Activated CD4-positive, alpha-beta T cell treated with anti-CD3 and anti-CD28 coated beads for 36 hours (primary cell): ENCODE measurements at regions of chr19 and their contacts with region 1.

Region 1: GRCh38 chr19:18000935-18001778 is 6.8 kb upstream of the ARRDC2 start:
- DNase-seq: peak; percentile 95
- ATAC-seq: peak; percentile 84
- H3K4me3 Mint-ChIP-seq: peak overlapping the region; percentile 85
- H3K27ac Mint-ChIP-seq: peak overlapping the region; percentile 95
- H3K4me1 Mint-ChIP-seq: peaks cover 25% of the 10 kb centered on the region
- H3K27me3 Mint-ChIP-seq: no peaks in the 10 kb centered on the region

Region 2: DNA sequence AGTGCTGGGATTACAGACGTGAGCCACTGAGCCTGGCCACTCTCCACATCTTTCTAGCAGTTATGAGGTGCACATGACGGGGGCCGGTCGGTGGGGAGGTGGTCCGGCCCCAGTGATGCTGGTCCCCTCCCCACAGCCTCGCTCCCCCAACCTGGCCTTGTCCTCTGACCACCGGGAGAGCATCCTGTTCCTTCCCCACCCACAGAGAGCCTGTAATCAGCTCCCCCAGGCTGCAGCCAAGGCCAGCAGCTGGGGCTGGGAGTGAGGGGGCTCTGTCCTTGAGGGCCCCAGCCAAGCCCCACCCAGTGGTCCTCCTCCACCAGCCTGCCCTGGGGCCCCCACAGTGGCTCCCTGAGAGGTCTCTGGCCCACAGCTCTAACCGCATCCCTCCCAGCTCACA is 176.8 kb before region 1 on chr19:
- CTCF ChIA-PET with region 1: no interaction called
- POLR2A ChIA-PET with region 1: no interaction called
- intact Hi-C with region 1: no loop called
- DNase-seq: no peak
- ATAC-seq: peak; percentile 12
- H3K4me3 Mint-ChIP-seq: no peak overlapping the region
- H3K27ac Mint-ChIP-seq: no peak overlapping the region
- H3K4me1 Mint-ChIP-seq: no peaks in the 10 kb centered on the region
- H3K27me3 Mint-ChIP-seq: no peaks in the 10 kb centered on the region

Region 3: GRCh38 chr19:17873786-17874757 is 127.1 kb before region 1 on chr19:
- CTCF ChIA-PET with region 1: interaction called, 5 read pairs
- POLR2A ChIA-PET with region 1: no interaction called
- intact Hi-C with region 1: loop called (anchors 1 to 5 kb)
- DNase-seq: peak; percentile 89
- ATAC-seq: peak; percentile 83
- H3K4me3 Mint-ChIP-seq: peak overlapping the region; percentile 78
- H3K27ac Mint-ChIP-seq: peak overlapping the region; percentile 25
- H3K4me1 Mint-ChIP-seq: peaks cover 17% of the 10 kb centered on the region
- H3K27me3 Mint-ChIP-seq: no peaks in the 10 kb centered on the region

Region 4: DNA sequence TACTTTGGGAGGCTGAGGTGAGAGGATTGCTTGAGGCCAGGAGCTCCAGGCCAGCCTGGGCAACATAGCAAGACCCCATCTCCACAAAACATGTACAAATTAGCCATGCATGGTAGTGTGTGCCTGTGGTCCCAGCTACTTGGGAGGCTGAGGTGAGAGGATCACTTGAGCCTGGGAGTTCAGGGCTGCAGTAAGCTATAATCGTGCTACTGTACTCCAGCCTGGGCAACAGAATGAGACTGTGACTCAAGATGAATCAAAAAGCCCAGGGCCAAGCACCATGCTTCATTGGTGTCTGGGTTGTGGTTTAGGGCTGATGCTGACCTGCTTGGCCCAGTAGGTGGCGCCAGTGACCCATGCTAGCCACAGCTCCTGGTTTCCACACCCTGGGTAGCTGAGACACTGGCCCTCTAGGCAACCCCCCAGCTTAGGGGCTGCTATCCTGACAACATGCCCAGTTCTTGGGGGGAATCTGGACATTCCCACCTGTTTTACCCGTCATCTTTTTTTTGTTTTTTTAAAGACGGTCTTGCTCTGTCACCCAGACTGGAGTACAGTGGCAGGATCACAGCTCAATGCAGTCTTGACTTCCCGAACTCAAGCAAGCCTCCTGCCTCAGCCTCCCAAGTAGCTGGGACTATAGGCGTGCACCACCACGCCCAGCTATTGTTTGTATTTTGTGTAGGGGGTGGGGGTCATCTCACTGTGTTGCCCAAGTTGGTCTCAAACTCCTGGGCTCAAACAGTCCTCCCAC is 62.9 kb before region 1 on chr19:
- CTCF ChIA-PET with region 1: interaction called, 102 read pairs
- POLR2A ChIA-PET with region 1: interaction called, 12 read pairs
- intact Hi-C with region 1: loop called (anchors 1 kb)
- DNase-seq: peak; percentile 92
- ATAC-seq: peak; percentile 98
- H3K4me3 Mint-ChIP-seq: no peak overlapping the region
- H3K27ac Mint-ChIP-seq: no peak overlapping the region
- H3K4me1 Mint-ChIP-seq: peaks cover 6% of the 10 kb centered on the region
- H3K27me3 Mint-ChIP-seq: no peaks in the 10 kb centered on the region

Region 5: GRCh38 chr19:18091217-18091608 is 90.1 kb after region 1 on chr19:
- CTCF ChIA-PET with region 1: interaction called, 3 read pairs
- POLR2A ChIA-PET with region 1: interaction called, 6 read pairs
- intact Hi-C with region 1: loop called in 1 of 2 experiments (anchors 2 kb)
- DNase-seq: peak; percentile 92
- ATAC-seq: peak; percentile 73
- H3K4me3 Mint-ChIP-seq: peak overlapping the region; percentile 57
- H3K27ac Mint-ChIP-seq: peak overlapping the region; percentile 99
- H3K4me1 Mint-ChIP-seq: peaks cover 63% of the 10 kb centered on the region
- H3K27me3 Mint-ChIP-seq: no peaks in the 10 kb centered on the region